ENCODE measurements at regions of chr16 and their contacts with region 1.

Region 1: GRCh38 chr16:28211712-28212534 is at the start of gene XPO6:
- DNase-seq: peak; percentile 94 to 100 (median 98)
- ATAC-seq: peak; percentile 83
- H3K4me3 Mint-ChIP-seq: peak within 1 kb of the TSS; percentile 80 to 97 (median 90)
- H3K27ac Mint-ChIP-seq: peak within 1 kb of the TSS; percentile 77 to 98 (median 90)
- H3K4me1 Mint-ChIP-seq: peaks cover 17 to 45% (median 36%) of the 10 kb centered on the region in 4 donors
- H3K27me3 Mint-ChIP-seq: no peaks in the 10 kb centered on the region
- polyA plus RNA-seq, gene XPO6: 90.2 to 109 (median 96.4) TPM

Region 2: DNA sequence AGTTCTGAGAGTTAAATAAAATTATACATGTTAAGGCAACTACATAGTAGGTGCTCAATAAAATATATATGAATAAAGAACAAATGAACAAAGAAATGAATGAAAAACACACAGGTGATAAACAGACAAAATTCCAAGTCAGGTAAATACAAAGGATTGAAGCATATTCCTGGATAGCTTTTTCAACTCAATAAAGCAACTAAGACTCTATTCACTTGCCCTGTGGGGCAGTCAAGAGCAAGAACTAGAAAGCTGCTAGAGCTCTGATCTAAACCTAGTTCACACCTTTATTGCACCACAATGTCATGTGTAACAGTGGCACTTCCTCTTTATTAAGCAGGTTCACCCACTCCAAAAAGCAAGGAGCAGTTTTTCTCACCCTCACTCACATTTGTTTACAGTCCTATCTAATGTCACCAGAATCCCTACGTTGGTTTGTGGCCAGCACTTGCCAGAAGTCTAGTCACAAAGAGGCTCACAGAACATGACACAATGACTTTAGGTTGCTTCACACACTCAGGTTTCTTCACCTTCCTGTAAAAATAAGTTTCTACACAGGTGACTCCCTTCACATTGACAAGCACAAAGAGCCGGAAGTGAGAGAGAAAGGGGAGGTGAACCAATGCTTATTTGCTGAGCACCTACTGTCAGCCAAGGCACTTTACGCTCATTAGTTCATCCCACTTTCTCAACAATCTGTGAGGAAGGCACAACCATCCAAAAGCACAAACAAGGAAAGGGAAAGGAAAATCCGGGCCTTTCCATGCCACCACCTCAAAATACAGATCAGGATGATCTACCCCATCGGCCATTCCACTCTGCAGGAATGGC is 70.9 kb before region 1 on chr16:
- POLR2A ChIA-PET with region 1: interaction called, 133 read pairs
- DNase-seq: peak; percentile 26 to 95 (median 80)
- ATAC-seq: peak; percentile 76 to 79
- H3K4me3 Mint-ChIP-seq: peak overlapping the region; percentile 73 to 90 (median 85)
- H3K27ac Mint-ChIP-seq: peak overlapping the region; percentile 87 to 100 (median 98)
- H3K4me1 Mint-ChIP-seq: peaks cover 39 to 95% (median 90%) of the 10 kb centered on the region in 4 donors
- H3K27me3 Mint-ChIP-seq: no peaks in the 10 kb centered on the region

Region 3: GRCh38 chr16:28166394-28167208 is 45.3 kb before region 1 on chr16:
- POLR2A ChIA-PET with region 1: interaction called, 19 read pairs
- DNase-seq: no peak
- ATAC-seq: no peak
- H3K4me3 Mint-ChIP-seq: peak overlapping the region in 9 of 10 donors; percentile 6 to 73 (median 49)
- H3K27ac Mint-ChIP-seq: peak overlapping the region; percentile 86 to 93 (median 91)
- H3K4me1 Mint-ChIP-seq: peaks cover 37 to 88% (median 79%) of the 10 kb centered on the region in 4 donors
- H3K27me3 Mint-ChIP-seq: no peaks in the 10 kb centered on the region

Region 4: DNA sequence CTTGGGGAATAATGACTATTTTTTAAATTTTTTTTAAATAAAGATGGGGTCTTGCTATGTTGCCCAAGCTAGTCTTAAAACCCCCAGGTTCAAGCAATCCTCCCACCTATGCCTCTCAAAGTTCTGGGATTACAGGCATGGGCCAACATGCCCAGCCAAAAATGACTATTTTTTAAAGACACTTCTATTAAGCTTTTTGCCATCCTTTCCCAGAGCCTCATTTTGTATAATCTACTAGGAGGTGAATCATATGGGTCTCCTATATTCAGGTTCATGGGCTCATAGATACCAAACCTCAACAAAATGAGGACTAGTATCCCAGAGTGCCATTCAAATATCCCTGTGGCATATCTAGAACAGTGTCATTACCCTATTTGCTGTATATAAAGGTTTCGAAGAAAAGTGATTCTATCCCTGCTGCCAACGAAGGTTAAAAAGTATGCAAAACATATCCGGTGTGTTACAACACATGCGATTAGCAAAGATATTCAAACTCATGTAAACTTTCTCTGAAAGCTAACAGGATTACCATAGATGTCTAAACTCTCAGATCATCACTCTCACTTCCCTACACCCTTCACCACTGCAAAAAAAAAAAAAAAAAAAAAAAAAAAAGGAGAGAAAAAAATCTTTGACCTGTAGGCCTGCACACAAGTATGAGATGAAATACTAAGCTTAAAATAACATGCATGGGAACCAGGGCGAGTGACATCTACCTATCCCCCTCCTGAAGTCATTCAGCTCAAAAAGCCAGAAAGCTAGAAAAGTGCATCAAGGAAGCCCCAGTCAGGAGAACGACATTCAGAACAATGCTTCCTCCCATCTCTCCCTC is 23.6 kb before region 1 on chr16:
- POLR2A ChIA-PET with region 1: interaction called, 93 read pairs
- DNase-seq: no peak
- ATAC-seq: no peak
- H3K4me3 Mint-ChIP-seq: peak overlapping the region; percentile 60 to 83 (median 76)
- H3K27ac Mint-ChIP-seq: peak overlapping the region; percentile 77 to 97 (median 94)
- H3K4me1 Mint-ChIP-seq: peaks cover 47 to 96% (median 92%) of the 10 kb centered on the region in 4 donors
- H3K27me3 Mint-ChIP-seq: no peaks in the 10 kb centered on the region

Region 5: GRCh38 chr16:28277537-28278388 is 65.8 kb after region 1 on chr16:
- POLR2A ChIA-PET with region 1: interaction called, 32 read pairs
- DNase-seq: peak; percentile 69 to 95 (median 84)
- ATAC-seq: peak; percentile 73 to 76
- H3K4me3 Mint-ChIP-seq: peak overlapping the region; percentile 70 to 88 (median 82)
- H3K27ac Mint-ChIP-seq: peak overlapping the region; percentile 90 to 99 (median 97)
- H3K4me1 Mint-ChIP-seq: peaks cover 32 to 62% (median 47%) of the 10 kb centered on the region in 4 donors
- H3K27me3 Mint-ChIP-seq: peaks cover 0 to 10% (median 0%) of the 10 kb centered on the region in 5 donors

Measured in naive thymus-derived CD8-positive, alpha-beta T cell (primary cell).